ENCODE measurements at regions of chr1 and their contacts with region 1.

Region 1: GRCh38 chr1:23122023-23122748 is 46.5 kb downstream of the LUZP1 start:
- DNase-seq: no peak
- ATAC-seq: no peak
- H3K4me3 Mint-ChIP-seq: no peak overlapping the region
- H3K27ac Mint-ChIP-seq: no peak overlapping the region
- H3K4me1 Mint-ChIP-seq: peaks cover 22% of the 10 kb centered on the region
- H3K27me3 Mint-ChIP-seq: no peaks in the 10 kb centered on the region
- CTCF ChIP-seq: no peak

Region 2: GRCh38 chr1:23148084-23148483 is 25.9 kb after region 1 on chr1:
- CTCF ChIA-PET with region 1: no interaction called
- POLR2A ChIA-PET with region 1: interaction called, 12 read pairs
- intact Hi-C with region 1: no loop called
- DNase-seq: no peak
- ATAC-seq: no peak
- H3K4me3 Mint-ChIP-seq: no peak overlapping the region
- H3K27ac Mint-ChIP-seq: no peak overlapping the region
- H3K4me1 Mint-ChIP-seq: peaks cover 5% of the 10 kb centered on the region
- H3K27me3 Mint-ChIP-seq: no peaks in the 10 kb centered on the region
- CTCF ChIP-seq: no peak